Left lung (tissue), 14 donors: ENCODE measurements at regions of chr4 and their contacts with region 1.

Region 1: GRCh38 chr4:184538023-184538599 is 63.8 kb upstream of the IRF2 start:
- DNase-seq: peak; percentile 83 to 94 (median 91)
- ATAC-seq: peak; percentile 93
- H3K4me3 ChIP-seq: peak overlapping the region; percentile 60 to 66
- H3K27ac ChIP-seq: peak overlapping the region; percentile 96 to 98
- H3K4me1 ChIP-seq: peaks cover 8 to 43% of the 10 kb centered on the region in 2 donors
- H3K27me3 ChIP-seq: no peaks in the 10 kb centered on the region
- CTCF ChIP-seq: peak; percentile 50 to 70

Region 2: GRCh38 chr4:184267673-184268583 is 270.2 kb before region 1 on chr4:
- intact Hi-C with region 1: loop called in 1 of 2 experiments (anchors 5 kb)
- DNase-seq: peak in 2 of 4 donors; percentile 81 to 82
- ATAC-seq: peak; percentile 78
- H3K4me3 ChIP-seq: peak overlapping the region; percentile 4 to 17
- H3K27ac ChIP-seq: peak overlapping the region; percentile 77 to 94
- H3K4me1 ChIP-seq: peaks cover 0 to 30% of the 10 kb centered on the region in 2 donors
- H3K27me3 ChIP-seq: no peaks in the 10 kb centered on the region
- CTCF ChIP-seq: no peak

Region 3: GRCh38 chr4:184474263-184475095 is 63.6 kb before region 1 on chr4 and contains the start of gene IRF2:
- intact Hi-C with region 1: loop called in 1 of 2 experiments (anchors 10 kb)
- DNase-seq: peak; percentile 95 to 99 (median 98)
- ATAC-seq: peak; percentile 89
- H3K4me3 ChIP-seq: peak within 1 kb of the TSS; percentile 82 to 87
- H3K27ac ChIP-seq: peak within 1 kb of the TSS; percentile 98 to 99
- H3K4me1 ChIP-seq: peaks cover 21 to 74% of the 10 kb centered on the region in 2 donors
- H3K27me3 ChIP-seq: no peaks in the 10 kb centered on the region
- CTCF ChIP-seq: peak; percentile 21 to 40
- polyA plus RNA-seq, gene IRF2: 45.3 to 49.4 (median 47.0) TPM

Region 4: GRCh38 chr4:184599492-184600135 is 61.5 kb after region 1 on chr4:
- intact Hi-C with region 1: no loop called
- DNase-seq: no peak
- ATAC-seq: peak; percentile 49
- H3K4me3 ChIP-seq: no peak overlapping the region
- H3K27ac ChIP-seq: no peak overlapping the region
- H3K4me1 ChIP-seq: no peaks in the 10 kb centered on the region
- H3K27me3 ChIP-seq: no peaks in the 10 kb centered on the region
- CTCF ChIP-seq: no peak